Heart right ventricle (tissue), 16 donors: ENCODE measurements at regions of chr19 and their contacts with region 1.

Region 1: GRCh38 chr19:18521885-18522624 is at the start of gene ELL:
- DNase-seq: peak; percentile 100
- ATAC-seq: peak; percentile 92 to 96 (median 95)
- H3K4me3 ChIP-seq: peak within 1 kb of the TSS; percentile 67 to 100 (median 98)
- H3K27ac ChIP-seq: peak within 1 kb of the TSS; percentile 79 to 100 (median 95)
- H3K4me1 ChIP-seq: peaks cover 0 to 43% (median 25%) of the 10 kb centered on the region in 9 donors
- H3K27me3 ChIP-seq: no peaks in the 10 kb centered on the region
- CTCF ChIP-seq: peak in 6 of 9 donors; percentile 10 to 54 (median 34)
- total RNA-seq, gene ELL: 5.7 to 13.1 (median 7.5) TPM

Region 2: GRCh38 chr19:18542936-18543815 is 21.1 kb after region 1 on chr19 and contains the start of gene FKBP8:
- intact Hi-C with region 1: loop called in 1 of 10 experiments (anchors 2 kb)
- DNase-seq: peak; percentile 94 to 96
- ATAC-seq: peak; percentile 96 to 99 (median 98)
- H3K4me3 ChIP-seq: peak within 1 kb of the TSS; percentile 26 to 85 (median 60)
- H3K27ac ChIP-seq: peak within 1 kb of the TSS; percentile 78 to 94 (median 90)
- H3K4me1 ChIP-seq: peaks cover 8 to 20% (median 16%) of the 10 kb centered on the region in 9 donors
- H3K27me3 ChIP-seq: no peaks in the 10 kb centered on the region
- CTCF ChIP-seq: no peak
- total RNA-seq, gene FKBP8: 132 to 196 (median 151) TPM

Region 3: DNA sequence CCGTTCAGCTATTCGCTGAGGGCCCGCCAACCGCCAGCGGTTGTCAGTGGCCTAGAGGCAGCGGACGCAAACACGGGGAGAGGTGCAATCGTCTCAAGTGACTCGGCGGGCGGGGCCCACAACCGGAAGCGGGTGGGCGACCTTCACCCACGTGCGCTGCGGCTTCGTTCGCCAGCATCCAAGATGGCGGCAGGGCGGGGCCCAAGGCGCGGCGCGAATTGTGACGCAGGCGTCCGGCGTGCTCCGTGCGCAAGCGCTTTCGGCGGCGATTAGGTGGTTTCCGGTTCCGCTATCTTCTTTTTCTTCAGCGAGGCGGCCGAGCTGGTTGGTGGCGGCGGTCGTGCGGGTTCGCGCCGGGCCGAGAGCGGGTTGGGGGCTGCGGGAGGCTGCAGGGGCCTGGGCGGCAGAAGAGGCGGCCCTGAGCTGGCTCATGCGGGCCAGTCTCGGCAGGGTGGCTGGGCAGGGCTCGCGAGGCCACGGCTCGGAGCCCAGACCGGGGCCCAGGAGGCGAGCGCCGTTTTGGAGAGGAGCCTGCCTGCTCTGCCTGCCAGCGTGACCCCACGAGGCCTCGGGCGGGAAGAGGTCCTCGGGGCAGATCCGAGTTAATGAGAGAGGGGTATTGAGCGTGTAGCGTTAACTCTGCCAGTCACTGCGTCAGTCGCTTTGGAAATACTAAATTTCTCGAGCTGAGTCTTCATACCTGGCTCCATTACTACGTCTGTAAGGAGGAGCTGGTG is 49.7 kb after region 1 on chr19 and contains the start of gene UBA52:
- intact Hi-C with region 1: loop called in 1 of 10 experiments (anchors 1 kb)
- DNase-seq: peak; percentile 97 to 98
- ATAC-seq: peak; percentile 93 to 98 (median 98)
- H3K4me3 ChIP-seq: peak within 1 kb of the TSS; percentile 58 to 99 (median 84)
- H3K27ac ChIP-seq: peak within 1 kb of the TSS; percentile 64 to 98 (median 92)
- H3K4me1 ChIP-seq: peaks cover 9 to 29% (median 19%) of the 10 kb centered on the region in 9 donors
- H3K27me3 ChIP-seq: no peaks in the 10 kb centered on the region
- CTCF ChIP-seq: no peak
- total RNA-seq, gene UBA52: 634 to 883 (median 716) TPM